Activated CD4-positive, alpha-beta memory T cell treated with anti-CD3 and anti-CD28 coated beads for 36 hours (primary cell): ENCODE measurements at regions of chr2 and their contacts with region 1.

Region 1: DNA sequence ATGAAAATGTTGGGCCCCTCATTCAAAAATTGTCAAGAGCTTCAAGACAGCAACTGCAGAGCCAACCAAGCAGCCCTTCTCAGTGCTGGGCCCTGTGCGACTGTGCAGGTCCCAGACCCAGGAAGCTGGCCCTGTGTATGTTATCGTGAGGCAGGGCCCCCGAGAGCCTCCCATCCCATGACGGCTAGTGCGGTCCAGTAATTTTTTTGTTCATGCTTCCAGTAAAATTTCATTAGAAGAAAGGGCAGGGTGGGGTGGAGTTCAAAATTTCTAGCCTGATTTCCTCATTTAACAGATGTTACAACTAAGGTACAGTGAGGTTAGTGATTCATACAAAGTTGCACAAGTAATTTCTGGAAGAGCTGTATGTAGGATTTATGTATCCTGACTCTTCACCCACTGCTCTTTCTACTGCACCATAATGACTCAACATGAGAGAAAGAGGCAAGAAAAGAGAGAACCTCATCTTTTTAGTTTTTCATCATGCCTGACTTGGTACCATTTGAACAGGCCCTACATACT is 105.5 kb downstream of the ZEB2 start:
- DNase-seq: peak; percentile 40
- H3K4me3 Mint-ChIP-seq: no peak overlapping the region
- H3K27ac Mint-ChIP-seq: peak overlapping the region; percentile 66
- H3K4me1 Mint-ChIP-seq: peaks cover 24% of the 10 kb centered on the region
- H3K27me3 Mint-ChIP-seq: no peaks in the 10 kb centered on the region

Region 2: GRCh38 chr2:144332356-144333142 is 81.8 kb before region 1 on chr2:
- CTCF ChIA-PET with region 1: no interaction called
- POLR2A ChIA-PET with region 1: no interaction called
- intact Hi-C with region 1: loop called (anchors 1 kb)
- DNase-seq: peak; percentile 92
- H3K4me3 Mint-ChIP-seq: peak overlapping the region; percentile 91
- H3K27ac Mint-ChIP-seq: peak overlapping the region; percentile 96
- H3K4me1 Mint-ChIP-seq: peaks cover 33% of the 10 kb centered on the region
- H3K27me3 Mint-ChIP-seq: no peaks in the 10 kb centered on the region

Region 3: DNA sequence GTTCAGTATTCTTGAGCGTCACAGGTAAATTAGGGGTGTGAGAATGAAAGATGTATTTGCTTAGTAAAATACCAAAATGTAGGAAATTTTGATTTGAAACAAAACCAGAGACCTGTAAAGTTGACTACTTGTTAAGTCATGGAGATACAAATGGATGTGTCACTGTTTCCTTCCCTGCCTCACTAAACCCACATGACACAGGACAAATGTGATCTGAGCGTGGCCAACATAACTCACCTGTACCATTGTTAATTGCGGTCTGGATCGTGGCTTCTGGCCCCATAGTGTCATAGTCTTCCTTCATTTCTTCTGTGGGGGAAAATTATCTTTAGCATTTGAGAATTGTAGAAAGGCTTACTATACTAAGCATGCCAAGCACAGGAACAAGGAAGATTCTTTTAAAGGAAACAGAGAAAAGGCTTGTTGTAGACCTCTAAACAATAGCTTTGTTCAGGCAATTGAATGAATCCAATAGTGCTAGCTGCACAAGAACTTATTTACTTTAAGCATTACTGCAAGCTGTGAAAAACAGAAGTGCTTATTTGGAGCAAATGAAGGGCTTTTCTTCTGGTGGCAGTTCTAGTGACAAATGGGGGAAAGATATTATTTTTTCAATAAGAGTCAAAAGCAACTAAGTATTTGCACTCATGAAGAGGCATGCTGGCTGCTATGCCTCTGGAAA is 10.3 kb after region 1 on chr2:
- CTCF ChIA-PET with region 1: no interaction called
- POLR2A ChIA-PET with region 1: no interaction called
- intact Hi-C with region 1: loop called (anchors 1 kb)
- DNase-seq: peak; percentile 44
- H3K4me3 Mint-ChIP-seq: no peak overlapping the region
- H3K27ac Mint-ChIP-seq: no peak overlapping the region
- H3K4me1 Mint-ChIP-seq: peaks cover 9% of the 10 kb centered on the region
- H3K27me3 Mint-ChIP-seq: peaks cover 14% of the 10 kb centered on the region

Region 4: GRCh38 chr2:144493027-144493809 is 78.8 kb after region 1 on chr2:
- CTCF ChIA-PET with region 1: no interaction called
- POLR2A ChIA-PET with region 1: no interaction called
- intact Hi-C with region 1: loop called (anchors 5 kb)
- DNase-seq: peak; percentile 27
- H3K4me3 Mint-ChIP-seq: no peak overlapping the region
- H3K27ac Mint-ChIP-seq: peak overlapping the region; percentile 55
- H3K4me1 Mint-ChIP-seq: peaks cover 29% of the 10 kb centered on the region
- H3K27me3 Mint-ChIP-seq: peaks cover 3% of the 10 kb centered on the region

Region 5: DNA sequence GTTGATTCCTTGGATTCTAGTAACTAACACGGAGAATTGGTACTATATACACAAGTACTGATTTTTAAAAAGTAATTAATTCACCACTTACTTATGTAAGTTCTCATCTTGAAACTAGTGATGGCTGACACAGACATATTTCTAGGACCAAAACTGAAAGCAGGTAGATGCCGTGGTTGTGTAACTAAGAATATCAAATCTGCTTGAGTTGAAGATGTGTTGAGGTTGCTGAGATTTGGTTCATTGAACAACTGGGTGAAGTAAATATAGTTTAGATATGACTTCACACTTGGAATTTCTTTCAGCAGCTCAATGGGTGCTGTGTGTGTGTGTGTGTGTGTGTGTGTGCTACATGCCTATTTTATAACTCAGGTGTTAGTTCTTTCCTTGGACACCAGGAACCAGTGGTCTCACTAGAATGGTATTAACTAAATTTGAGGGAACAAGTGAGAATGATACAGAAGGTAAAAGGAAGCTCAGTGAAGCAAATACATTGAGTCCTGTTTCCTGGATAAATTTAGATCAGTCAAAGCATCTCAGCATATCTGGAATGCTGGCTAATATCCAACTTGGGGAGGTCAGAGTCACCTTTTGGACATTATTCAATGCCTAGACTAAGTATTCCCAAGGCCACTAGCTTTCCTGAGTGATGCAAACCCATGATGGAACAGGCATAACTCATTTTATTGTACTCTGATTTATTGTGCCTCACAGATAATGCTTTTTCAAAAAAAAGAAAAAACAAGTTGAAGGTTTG is 216.3 kb after region 1 on chr2:
- CTCF ChIA-PET with region 1: no interaction called
- POLR2A ChIA-PET with region 1: no interaction called
- intact Hi-C with region 1: no loop called
- DNase-seq: no peak
- H3K4me3 Mint-ChIP-seq: no peak overlapping the region
- H3K27ac Mint-ChIP-seq: no peak overlapping the region
- H3K4me1 Mint-ChIP-seq: no peaks in the 10 kb centered on the region
- H3K27me3 Mint-ChIP-seq: peaks cover 19% of the 10 kb centered on the region